ENCODE measurements at regions of chr11 and their contacts with region 1.

Region 1: DNA sequence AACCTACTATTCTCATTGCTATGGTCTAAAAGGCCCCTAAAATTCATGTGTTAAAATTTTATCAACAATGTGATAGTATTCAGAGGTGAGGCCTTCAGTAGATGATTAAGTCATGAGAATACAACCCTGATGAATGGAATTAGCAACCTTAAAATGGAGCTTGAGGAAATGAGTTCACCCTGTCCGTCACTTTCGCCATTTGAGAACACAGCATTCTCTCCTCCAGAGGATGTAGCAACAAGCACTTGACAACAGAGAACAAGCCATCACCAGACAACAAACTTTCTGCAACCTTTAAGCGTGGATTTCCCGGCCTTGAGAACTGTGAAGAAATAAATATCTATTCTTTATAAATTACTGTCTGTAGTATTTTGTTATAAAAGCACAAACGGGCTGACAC is 197.0 kb downstream of the SBF2 start:
- DNase-seq: no peak

Region 2: GRCh38 chr11:10017911-10018310 is 79.1 kb before region 1 on chr11:
- in situ Hi-C with region 1: no loop called
- DNase-seq: no peak

Region 3: DNA sequence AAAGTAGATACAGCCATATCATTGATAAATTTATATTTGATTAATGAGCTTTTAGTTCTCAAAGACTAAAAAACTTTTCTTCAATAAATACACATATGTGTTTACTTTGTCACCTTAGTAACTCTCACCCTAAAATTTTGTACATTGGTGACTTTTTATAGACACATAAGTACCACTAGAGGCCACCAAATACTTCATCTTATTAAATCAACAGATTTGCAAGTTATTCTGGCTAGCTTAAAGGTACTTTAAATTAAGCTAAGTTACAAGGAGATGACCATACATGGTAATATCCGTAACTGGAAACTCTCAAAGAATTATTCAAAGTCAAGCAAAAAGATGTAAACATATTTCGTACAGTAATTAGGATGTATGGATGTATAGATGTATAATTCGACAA is 84.8 kb after region 1 on chr11:
- in situ Hi-C with region 1: loop called (anchors 5 kb)
- DNase-seq: no peak

Measured in G401 (cell line).